Left cardiac atrium (tissue), 4 donors: ENCODE measurements at regions of chr20 and their contacts with region 1.

Region 1: DNA sequence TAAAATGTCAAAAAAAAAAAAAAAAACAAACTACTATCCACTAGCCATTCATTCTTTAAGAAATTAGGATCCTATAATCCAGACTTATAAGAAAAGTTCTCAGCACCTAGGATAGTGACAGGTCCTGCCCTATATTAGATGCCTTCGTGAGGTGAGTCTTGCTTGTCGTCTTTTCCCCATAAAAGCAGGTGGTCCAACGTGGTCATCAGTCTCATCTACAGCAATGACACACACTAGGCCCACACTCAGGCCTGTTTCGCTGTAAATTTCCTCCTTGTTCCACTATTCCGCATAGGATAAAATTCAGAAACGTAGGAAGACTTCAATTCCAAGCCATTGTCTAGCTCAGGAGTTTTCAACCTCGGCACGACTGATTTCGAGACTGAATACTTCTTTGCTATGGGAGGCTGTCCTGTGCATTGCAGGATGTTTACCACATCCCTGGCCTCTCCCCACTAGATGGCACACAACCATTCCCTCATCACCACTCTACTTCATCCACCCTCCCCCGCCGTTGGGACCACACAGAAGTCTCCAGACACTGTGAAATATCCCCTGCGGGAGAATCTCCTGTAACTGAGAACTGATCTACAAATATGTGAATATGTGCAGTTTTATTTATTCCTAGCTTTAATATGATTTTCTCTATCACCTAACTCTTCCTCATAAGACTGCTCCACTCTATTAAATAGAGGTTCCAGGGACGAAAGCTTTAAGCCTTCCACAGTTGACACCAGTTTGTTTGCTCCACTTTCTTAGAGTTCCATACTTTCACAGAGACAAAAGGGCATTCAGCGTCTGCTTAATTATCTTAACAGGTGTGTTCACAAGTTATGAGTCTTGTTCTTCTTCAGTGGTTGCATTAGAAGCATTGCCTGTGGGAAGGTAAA is 346.3 kb downstream of the BMP2 start:
- DNase-seq: peak; percentile 23
- ATAC-seq: peak; percentile 84 to 87

Region 2: GRCh38 chr20:6920991-6921613 is 192.7 kb before region 1 on chr20:
- intact Hi-C with region 1: no loop called
- DNase-seq: no peak
- ATAC-seq: no peak

Region 3: GRCh38 chr20:7161690-7162089 is 47.9 kb after region 1 on chr20:
- intact Hi-C with region 1: loop called in 1 of 2 experiments (anchors 10 kb)
- DNase-seq: no peak
- ATAC-seq: peak in 1 of 2 donors; percentile 26

Region 4: GRCh38 chr20:7272512-7272911 is 158.7 kb after region 1 on chr20:
- intact Hi-C with region 1: loop called in 1 of 2 experiments (anchors 10 kb)
- DNase-seq: no peak
- ATAC-seq: no peak

Region 5: DNA sequence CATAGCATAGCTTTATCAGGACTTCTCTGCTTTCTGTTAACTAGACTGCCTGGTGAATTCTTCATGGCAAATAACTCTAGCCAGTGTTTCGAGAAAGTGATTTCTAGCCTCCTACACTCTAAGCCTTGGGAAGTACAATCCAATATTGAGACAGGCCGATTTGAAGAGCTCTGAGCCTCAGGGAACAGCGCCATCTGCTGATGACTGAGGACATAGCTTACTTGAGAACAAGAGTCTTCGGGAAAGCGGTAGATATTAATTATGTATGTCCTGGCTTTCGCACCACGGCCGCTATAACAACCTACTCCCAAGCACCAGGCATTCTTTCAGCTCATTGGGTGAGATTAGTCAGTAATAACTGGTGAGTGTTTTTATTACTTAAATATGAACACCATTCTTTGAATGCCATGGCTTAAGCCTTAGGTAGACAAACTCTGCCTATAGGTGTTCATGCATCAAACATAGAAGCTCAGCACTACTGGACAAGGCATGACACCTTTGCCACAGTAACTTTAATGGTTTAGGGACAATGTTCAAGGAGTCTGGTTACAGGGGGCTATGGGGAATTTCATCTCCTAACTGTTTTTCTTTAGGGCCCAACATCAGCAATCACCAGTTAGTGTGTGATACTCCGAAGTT is 172.2 kb after region 1 on chr20:
- intact Hi-C with region 1: loop called in 1 of 2 experiments (anchors 5 kb)
- DNase-seq: peak; percentile 82
- ATAC-seq: peak; percentile 83 to 88

Region 6: DNA sequence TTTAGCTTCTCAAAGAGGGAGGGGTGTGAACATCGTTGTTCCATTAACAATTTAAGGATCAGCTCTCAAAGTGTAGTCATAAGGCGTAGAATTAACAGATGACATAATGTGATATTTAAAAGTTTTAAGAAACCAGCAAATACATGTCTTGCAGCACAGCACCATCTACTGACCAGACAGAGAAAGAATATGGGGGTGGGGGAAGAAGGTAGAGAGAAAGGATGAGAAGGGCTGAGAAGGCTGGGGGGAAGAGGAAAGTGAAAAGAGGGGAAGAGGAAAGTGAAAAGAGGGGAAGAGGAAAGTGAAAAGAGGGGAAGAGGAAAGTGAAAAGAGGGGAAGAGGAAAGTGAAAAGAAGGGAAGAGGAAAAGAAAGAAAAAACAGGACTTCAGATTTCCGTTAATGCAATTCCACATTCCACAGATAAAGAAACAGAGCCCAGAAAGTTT is 745.6 kb after region 1 on chr20:
- intact Hi-C with region 1: loop called in 1 of 2 experiments (anchors 5 kb)
- DNase-seq: no peak
- ATAC-seq: peak; percentile 82